ENCODE measurements at regions of chr21 and their contacts with region 1.

Region 1: GRCh38 chr21:36504067-36505058 is 24.4 kb upstream of the CLDN14 start:
- DNase-seq: no peak
- ATAC-seq: peak in 1 of 2 donors; percentile 44
- H3K4me3 ChIP-seq: no peak overlapping the region
- H3K27ac ChIP-seq: no peak overlapping the region
- H3K4me1 ChIP-seq: no peaks in the 10 kb centered on the region
- H3K27me3 ChIP-seq: no peaks in the 10 kb centered on the region
- CTCF ChIP-seq: peak; percentile 78 to 94 (median 89)
- POLR2A ChIP-seq: no peak

Region 2: GRCh38 chr21:36419996-36420395 is 84.4 kb before region 1 on chr21:
- in situ Hi-C with region 1: no loop called
- intact Hi-C with region 1: loop called (anchors 5 kb)
- DNase-seq: peak; percentile 77 to 84
- ATAC-seq: peak; percentile 90 to 94
- H3K4me3 ChIP-seq: no peak overlapping the region
- H3K27ac ChIP-seq: peak overlapping the region in 1 of 4 donors; percentile 30
- H3K4me1 ChIP-seq: peaks cover 0 to 3% of the 10 kb centered on the region in 2 donors
- H3K27me3 ChIP-seq: no peaks in the 10 kb centered on the region
- CTCF ChIP-seq: peak; percentile 76 to 84 (median 81)
- POLR2A ChIP-seq: no peak

Region 3: DNA sequence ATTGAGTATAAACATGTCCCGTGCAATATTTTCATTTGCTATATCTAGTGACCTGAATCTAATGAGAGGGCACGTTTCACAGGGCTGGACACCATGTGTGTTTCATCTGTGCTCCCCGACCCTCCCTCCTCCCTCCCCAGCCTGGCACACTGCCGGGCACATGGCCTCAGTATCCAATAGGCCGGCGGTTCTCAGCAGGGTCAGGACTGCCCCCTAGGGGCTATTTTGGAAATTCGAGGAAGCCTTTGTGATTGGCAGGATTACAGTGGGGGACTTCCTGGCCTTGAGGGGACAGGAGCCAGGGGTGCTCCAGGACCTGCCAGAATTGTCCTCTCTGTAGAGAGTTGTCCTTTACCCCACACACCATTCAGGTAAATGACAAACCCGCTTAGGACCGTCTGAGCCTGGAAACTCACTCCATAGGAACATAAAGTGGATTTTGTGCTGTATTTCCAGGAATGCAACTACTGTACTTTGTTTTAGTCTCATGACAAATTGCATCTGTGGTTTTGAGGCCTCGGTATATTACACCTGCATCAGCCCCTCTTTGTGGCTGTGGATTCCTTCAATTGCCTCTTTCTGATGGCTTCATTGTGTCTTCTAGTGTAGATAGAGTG is 85.1 kb after region 1 on chr21:
- in situ Hi-C with region 1: no loop called
- intact Hi-C with region 1: loop called (anchors 5 kb)
- DNase-seq: peak in 1 of 2 donors; percentile 41
- ATAC-seq: peak in 1 of 2 donors; percentile 58
- H3K4me3 ChIP-seq: no peak overlapping the region
- H3K27ac ChIP-seq: no peak overlapping the region
- H3K4me1 ChIP-seq: no peaks in the 10 kb centered on the region
- H3K27me3 ChIP-seq: no peaks in the 10 kb centered on the region
- CTCF ChIP-seq: peak in 4 of 5 experiments; percentile 28 to 57 (median 42)
- POLR2A ChIP-seq: no peak